Dorsolateral prefrontal cortex (tissue), 120 donors: ENCODE measurements at regions of chr5 and their contacts with region 1.

Region 1: GRCh38 chr5:127351418-127351817 is 60.8 kb downstream of the MEGF10 start:
- DNase-seq: no peak
- H3K4me3 ChIP-seq: no peak overlapping the region
- H3K27ac ChIP-seq: peak overlapping the region in 7 of 59 donors; percentile 11 to 89 (median 84)
- H3K27me3 ChIP-seq: no peaks in the 10 kb centered on the region
- CTCF ChIP-seq: no peak

Region 2: GRCh38 chr5:127290019-127290945 is 61.1 kb before region 1 on chr5 and contains the start of gene MEGF10:
- intact Hi-C with region 1: no loop called
- DNase-seq: peak; percentile 41 to 84 (median 73)
- H3K4me3 ChIP-seq: peak within 1 kb of the TSS; percentile 47 to 86 (median 72)
- H3K27ac ChIP-seq: peak within 1 kb of the TSS; percentile 72 to 99 (median 95)
- H3K27me3 ChIP-seq: peaks cover 0 to 6% (median 0%) of the 10 kb centered on the region in 45 donors
- CTCF ChIP-seq: peak; percentile 51 to 88 (median 79)
- total RNA-seq, gene MEGF10: 22.4 to 157 (median 67.0) TPM

Region 3: DNA sequence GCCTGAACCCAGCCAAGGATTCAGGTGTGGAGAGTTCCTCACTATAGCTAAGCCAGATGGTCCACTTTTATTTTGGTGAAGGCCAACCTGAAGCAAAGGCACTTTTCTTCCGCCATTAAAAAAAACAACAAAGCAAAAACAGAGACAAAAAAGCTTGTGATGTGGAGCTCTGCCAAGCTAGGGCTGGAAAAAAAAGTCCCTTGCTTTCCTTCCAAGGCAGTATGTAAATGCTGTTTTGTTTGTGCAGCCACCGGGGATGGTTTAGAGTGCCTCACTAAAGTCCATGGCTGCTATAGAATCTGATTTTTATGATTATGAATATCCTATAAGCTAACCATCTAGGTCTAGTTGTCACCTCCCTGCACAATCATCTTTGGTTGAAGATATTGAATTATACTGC is 45.9 kb before region 1 on chr5:
- intact Hi-C with region 1: loop called in 1 of 2 experiments (anchors 5 kb)
- DNase-seq: peak in 2 of 10 donors; percentile 20 to 58
- H3K4me3 ChIP-seq: peak overlapping the region in 4 of 59 donors; percentile 0 to 36 (median 14)
- H3K27ac ChIP-seq: peak overlapping the region; percentile 25 to 100 (median 94)
- H3K27me3 ChIP-seq: no peaks in the 10 kb centered on the region
- CTCF ChIP-seq: peak in 1 of 56 donors; percentile 10

Region 4: GRCh38 chr5:127431977-127432585 is 80.7 kb after region 1 on chr5:
- intact Hi-C with region 1: loop called in 1 of 2 experiments (anchors 5 kb)
- DNase-seq: no peak
- H3K4me3 ChIP-seq: peak overlapping the region in 1 of 59 donors; percentile 11
- H3K27ac ChIP-seq: peak overlapping the region in 49 of 59 donors; percentile 2 to 94 (median 46)
- H3K27me3 ChIP-seq: no peaks in the 10 kb centered on the region
- CTCF ChIP-seq: no peak